CD8-positive, alpha-beta memory T cell (primary cell): ENCODE measurements at regions of chr15 and their contacts with region 1.

Region 1: GRCh38 chr15:79923515-79924395 is 26.9 kb upstream of the MTHFS start:
- DNase-seq: peak; percentile 96 to 100 (median 98)
- H3K4me3 ChIP-seq: peak overlapping the region; percentile 93
- H3K4me3 Mint-ChIP-seq: peak overlapping the region; percentile 92 to 98 (median 94)
- H3K27ac ChIP-seq: peak overlapping the region; percentile 97
- H3K27ac Mint-ChIP-seq: peak overlapping the region; percentile 93 to 99 (median 96)
- H3K4me1 ChIP-seq: peaks cover 17% of the 10 kb centered on the region
- H3K4me1 Mint-ChIP-seq: peaks cover 20 to 29% (median 28%) of the 10 kb centered on the region in 3 donors
- H3K27me3 ChIP-seq: no peaks in the 10 kb centered on the region
- H3K27me3 Mint-ChIP-seq: no peaks in the 10 kb centered on the region

Region 2: DNA sequence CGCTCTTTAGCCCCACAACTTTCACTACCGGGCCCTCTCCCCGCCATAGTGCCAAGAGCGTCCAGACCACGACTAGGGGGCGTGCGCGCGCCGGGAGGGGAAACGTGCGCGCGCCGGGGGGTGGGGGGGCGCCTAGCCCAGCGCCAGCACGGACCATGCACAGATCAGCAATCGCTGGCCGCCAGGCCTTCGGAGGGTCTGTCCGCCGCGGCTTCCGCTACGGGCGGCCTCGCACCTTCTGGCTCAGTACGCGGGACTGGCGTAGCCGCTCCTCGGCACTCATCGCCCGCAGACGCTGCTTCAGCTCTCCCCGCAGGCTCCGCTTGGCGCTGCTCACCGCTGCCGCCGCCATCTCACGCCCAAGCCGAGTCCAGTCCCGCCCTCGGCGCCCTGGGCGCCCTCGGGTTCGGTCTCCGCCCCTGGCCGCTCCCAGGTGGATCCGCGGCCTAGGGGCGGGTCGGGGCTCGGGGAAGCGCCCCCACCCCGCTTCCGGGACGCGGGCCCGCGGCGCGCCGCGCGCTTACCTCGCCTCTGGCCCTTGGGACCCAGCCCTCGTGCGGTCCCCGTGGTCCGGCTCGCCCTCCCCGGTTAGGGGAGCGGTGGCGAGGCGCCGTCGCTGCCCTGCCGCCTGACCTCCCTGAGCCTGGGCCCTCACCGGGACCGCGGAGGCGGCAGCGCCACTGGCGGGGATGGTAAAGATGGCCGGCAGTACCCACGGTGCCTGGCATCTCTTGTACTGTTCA is 26.9 kb before region 1 on chr15 and contains the start of gene MTHFS:
- CTCF ChIA-PET with region 1: interaction called, 10 read pairs
- POLR2A ChIA-PET with region 1: interaction called, 64 read pairs
- DNase-seq: peak; percentile 62 to 87 (median 83)
- H3K4me3 ChIP-seq: peak within 1 kb of the TSS; percentile 66
- H3K4me3 Mint-ChIP-seq: peak within 1 kb of the TSS; percentile 94 to 100 (median 98)
- H3K27ac ChIP-seq: peak within 1 kb of the TSS; percentile 93
- H3K27ac Mint-ChIP-seq: peak within 1 kb of the TSS; percentile 95 to 100 (median 100)
- H3K4me1 ChIP-seq: peaks cover 29% of the 10 kb centered on the region
- H3K4me1 Mint-ChIP-seq: peaks cover 35 to 46% (median 40%) of the 10 kb centered on the region in 3 donors
- H3K27me3 ChIP-seq: no peaks in the 10 kb centered on the region
- H3K27me3 Mint-ChIP-seq: no peaks in the 10 kb centered on the region
- total RNA-seq, gene MTHFS: 30.2 to 31.1 TPM

Region 3: DNA sequence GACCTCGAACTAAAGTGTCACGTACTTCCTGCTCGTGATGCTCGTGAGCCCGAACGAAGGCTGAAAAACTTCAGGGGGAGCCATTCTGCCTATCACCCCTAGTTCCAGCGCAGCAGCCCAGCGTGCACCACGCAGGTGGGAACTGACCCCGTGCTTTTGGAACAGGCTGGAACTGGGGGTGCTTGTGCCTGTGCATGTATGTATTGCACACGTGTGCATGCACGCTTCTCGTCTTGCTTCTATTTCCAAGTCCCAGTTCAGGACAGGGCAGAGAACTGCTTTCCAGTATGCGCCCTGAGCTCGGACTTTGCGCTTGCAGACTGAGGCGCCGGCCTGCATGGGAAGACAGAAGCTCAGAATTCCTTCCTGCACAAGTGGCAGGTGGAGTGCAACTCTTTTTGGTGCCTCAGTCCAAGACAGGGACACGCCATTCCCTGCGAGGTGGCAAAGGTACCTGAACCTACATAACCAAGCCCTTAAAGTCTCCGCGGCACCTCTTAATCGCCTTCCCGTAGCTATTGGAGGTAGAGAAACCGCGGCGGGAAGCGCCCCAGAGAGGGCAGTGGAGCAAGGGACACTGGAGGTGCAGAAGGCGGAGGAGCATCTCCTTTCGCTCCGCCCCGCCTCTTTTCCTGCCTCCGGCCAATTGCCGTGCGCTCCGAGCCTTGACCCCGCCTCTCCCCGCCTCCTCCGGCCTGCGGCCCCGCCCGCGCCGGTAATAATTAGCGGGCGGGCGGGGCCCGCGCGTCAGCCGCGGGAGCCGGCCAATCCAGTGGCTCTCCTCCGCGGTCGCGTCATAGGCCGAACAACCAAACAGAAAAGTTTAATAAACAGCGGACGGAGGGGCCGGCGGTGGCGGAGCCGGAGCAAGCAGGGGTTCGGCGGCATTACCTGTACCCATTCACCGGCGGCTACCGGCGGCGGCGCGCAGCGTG is 135.4 kb after region 1 on chr15 and contains the start of gene ZFAND6:
- CTCF ChIA-PET with region 1: no interaction called
- POLR2A ChIA-PET with region 1: interaction called, 17 read pairs
- DNase-seq: peak; percentile 92 to 95 (median 94)
- H3K4me3 ChIP-seq: peak within 1 kb of the TSS; percentile 98
- H3K4me3 Mint-ChIP-seq: peak within 1 kb of the TSS; percentile 92 to 97 (median 93)
- H3K27ac ChIP-seq: peak within 1 kb of the TSS; percentile 83
- H3K27ac Mint-ChIP-seq: peak within 1 kb of the TSS; percentile 90 to 96 (median 94)
- H3K4me1 ChIP-seq: peaks cover 20% of the 10 kb centered on the region
- H3K4me1 Mint-ChIP-seq: peaks cover 28 to 46% (median 36%) of the 10 kb centered on the region in 3 donors
- H3K27me3 ChIP-seq: no peaks in the 10 kb centered on the region
- H3K27me3 Mint-ChIP-seq: no peaks in the 10 kb centered on the region
- total RNA-seq, gene ZFAND6: 27.5 to 28.6 TPM